ENCODE measurements at regions of chr2 and their contacts with region 1.

Region 1: GRCh38 chr2:119476301-119477021 is 44.8 kb downstream of the TMEM37 start:
- DNase-seq: peak; percentile 87
- H3K4me3 ChIP-seq: peak overlapping the region; percentile 23 to 42; a peak in 2 of 4 replicates
- H3K27ac ChIP-seq: no peak overlapping the region; a peak in 1 of 4 replicates
- H3K4me1 ChIP-seq: peaks cover 0 to 22% of the 10 kb centered on the region in 2 experiments; a peak in 1 of 4 replicates
- H3K27me3 ChIP-seq: no peaks in the 10 kb centered on the region
- CTCF ChIP-seq: peak; percentile 90
- EP300 ChIP-seq: no peak
- RAD21 ChIP-seq: peak; percentile 87

Region 2: DNA sequence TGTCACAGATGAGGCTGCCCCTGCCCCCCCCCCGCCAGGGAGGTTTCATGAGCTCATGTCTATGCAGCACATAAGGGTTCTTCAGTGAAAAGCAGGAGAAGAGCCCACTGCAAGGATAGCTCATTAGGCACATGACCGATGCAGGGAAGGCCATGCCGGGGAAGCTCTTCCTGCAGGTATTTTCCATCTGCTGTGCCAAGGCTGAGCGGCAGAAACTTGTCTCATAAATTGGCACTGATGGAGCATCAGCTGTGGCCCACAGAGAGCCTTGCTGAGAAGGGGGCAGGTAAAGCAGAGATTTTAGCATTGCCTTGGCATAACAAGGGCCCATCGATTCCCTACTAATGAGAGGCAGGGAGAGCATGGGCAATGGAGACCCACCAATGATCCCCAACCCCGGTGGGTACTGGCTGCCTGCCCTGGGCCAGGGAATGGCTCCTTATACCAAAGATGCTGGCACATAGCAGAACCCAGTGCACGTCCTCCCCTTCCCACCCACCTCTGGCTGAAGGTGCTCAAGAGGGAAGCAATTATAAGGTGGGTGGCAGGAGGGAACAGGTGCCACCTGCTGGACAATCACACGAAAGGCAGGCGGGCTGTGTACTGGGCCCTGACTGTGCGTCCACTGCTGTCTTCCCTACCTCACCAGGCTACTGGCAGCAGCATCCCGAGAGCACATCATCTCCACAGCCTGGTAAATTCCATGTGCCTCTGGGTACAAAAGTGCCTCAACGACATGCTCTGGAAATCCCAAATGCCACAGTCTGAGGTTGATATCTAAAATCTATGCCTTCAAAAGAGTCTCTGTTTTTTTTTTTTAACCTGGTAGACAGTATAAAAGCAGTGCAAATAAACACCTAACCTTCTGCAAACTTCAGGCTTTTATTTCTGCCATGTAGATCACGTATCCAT is 211.4 kb before region 1 on chr2:
- CTCF ChIA-PET with region 1: no interaction called
- POLR2A ChIA-PET with region 1: no interaction called
- DNase-seq: peak; percentile 75
- H3K4me3 ChIP-seq: no peak overlapping the region; a peak in 1 of 4 replicates
- H3K27ac ChIP-seq: no peak overlapping the region
- H3K4me1 ChIP-seq: no peaks in the 10 kb centered on the region
- H3K27me3 ChIP-seq: no peaks in the 10 kb centered on the region
- CTCF ChIP-seq: peak; percentile 78
- EP300 ChIP-seq: no peak
- RAD21 ChIP-seq: peak; percentile 83

Region 3: DNA sequence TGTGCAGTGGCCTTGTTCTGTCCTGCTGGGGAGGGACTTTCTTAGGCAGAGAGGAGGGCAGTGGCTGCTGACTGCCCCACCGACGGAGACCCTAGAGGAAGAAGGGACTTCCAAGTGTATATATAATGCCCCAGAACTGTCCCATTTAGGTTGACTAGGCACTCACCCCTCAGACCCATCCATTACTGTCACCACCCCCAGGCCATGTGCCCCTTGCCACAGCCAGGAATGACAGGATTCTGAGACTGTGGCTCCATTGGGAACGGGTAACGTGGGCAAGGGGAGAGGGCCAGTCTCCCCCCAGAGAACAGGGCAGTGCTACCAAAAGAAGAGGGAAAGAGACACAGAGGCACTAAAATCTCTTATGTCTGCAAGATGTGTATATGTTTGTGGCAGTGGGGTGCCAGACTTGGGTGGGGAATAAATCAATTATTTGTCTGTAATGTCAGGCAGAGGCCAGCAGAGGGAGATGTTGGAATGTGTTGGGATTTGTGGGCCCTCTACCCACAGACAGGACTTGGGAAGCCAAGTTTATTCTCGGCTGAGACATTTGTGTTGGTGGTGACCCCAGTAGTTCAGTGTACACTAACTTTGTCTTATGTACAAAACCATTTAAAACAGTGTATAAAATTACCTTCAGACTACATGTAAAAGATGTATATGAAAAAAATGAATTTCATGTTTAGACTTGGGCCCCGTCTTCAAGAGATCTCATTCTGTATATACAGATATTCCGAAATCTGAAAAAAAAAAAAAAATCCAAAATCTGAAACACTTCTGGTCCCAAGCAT is 68.8 kb before region 1 on chr2:
- CTCF ChIA-PET with region 1: interaction called, 95 read pairs
- POLR2A ChIA-PET with region 1: no interaction called
- DNase-seq: peak; percentile 79
- H3K4me3 ChIP-seq: no peak overlapping the region
- H3K27ac ChIP-seq: no peak overlapping the region
- H3K4me1 ChIP-seq: no peaks in the 10 kb centered on the region
- H3K27me3 ChIP-seq: no peaks in the 10 kb centered on the region; the same call in 1 of the 2 replicates
- CTCF ChIP-seq: peak; percentile 82
- EP300 ChIP-seq: no peak
- RAD21 ChIP-seq: peak; percentile 96

Region 4: DNA sequence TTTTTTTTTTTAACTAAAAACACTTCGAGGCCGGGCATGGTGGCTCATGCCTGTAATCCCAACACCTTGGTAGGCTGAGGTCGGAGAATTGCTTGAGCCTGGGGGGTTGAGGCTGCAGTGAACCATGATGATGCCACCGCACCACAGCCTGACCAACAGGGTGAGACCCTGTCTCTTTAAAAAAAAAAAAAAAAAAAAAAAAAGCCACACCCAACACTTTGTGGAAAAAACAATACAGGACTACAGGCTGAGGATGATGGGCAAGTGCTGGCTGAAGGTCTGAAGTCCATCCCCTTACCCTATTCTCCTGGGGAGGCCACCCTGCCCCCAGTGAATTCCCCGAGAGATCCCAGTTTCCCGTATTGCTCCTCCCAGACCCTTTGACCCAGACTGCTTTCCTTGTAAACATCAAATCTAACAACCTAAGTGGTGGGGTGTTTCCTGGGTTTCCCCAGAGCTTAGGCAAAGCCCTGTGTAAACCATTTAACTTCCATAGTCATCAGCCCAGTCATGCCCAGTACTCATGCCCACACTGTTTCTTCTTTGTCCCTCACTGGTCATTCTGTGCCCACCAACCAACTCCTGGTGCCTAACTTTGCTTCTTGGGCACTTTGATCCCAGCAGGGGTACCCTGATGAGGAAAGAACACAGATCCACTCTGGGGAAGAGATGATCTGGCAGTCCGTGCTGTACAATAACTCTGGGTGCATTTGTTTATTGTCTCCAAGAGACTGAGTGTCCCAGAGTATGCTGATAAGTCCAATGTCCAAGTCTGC is 50.7 kb before region 1 on chr2:
- CTCF ChIA-PET with region 1: interaction called, 17 read pairs
- POLR2A ChIA-PET with region 1: no interaction called
- DNase-seq: no peak
- H3K4me3 ChIP-seq: no peak overlapping the region
- H3K27ac ChIP-seq: no peak overlapping the region
- H3K4me1 ChIP-seq: peaks cover 0 to 3% of the 10 kb centered on the region in 2 experiments; a peak in 2 of 4 replicates
- H3K27me3 ChIP-seq: peaks cover 7% of the 10 kb centered on the region
- CTCF ChIP-seq: no peak
- EP300 ChIP-seq: no peak
- RAD21 ChIP-seq: no peak

Region 5: DNA sequence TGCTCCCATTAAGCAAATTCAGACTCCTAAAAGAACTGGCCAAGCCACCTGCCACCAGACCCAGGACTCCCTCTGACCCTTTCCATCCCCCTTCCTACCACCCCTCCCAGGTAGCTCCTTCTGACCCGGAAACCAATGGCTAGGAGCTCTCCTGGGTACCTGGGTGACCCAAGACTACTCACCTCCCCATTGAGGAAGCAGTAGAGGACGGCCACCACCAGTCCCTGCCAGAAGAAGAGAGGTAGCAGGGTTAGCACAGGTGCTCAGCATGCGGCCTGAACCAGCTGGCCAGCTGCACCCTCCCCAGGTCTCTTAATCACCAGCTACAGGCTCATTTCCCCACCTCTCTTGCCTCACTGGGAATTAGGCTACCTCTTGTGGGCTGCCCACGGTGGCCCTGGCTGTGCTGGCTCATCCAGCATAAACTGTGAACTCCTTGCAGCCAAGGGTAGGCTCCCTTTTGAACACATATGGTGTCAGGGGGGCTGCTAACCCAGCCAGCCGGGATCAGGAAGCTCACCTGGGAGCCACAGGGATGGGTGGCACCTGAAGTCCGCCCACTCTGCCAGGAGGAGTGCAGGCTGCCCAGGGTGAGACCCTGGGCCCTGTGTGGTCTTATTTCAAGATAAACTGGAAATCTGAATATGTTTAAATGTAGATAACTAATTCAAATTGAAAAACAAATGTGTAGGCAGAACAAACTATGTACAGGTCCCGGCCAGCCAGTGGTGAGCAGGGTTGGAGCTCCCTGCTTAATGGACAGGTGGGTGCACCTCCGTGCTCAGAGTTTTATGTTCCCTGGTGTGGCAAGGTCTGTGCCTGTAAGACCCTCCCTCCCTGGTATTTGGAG is 34.9 kb before region 1 on chr2:
- CTCF ChIA-PET with region 1: interaction called, 18 read pairs
- POLR2A ChIA-PET with region 1: no interaction called
- DNase-seq: no peak
- H3K4me3 ChIP-seq: no peak overlapping the region
- H3K27ac ChIP-seq: no peak overlapping the region
- H3K4me1 ChIP-seq: peaks cover 0 to 6% of the 10 kb centered on the region in 2 experiments; a peak in 1 of 4 replicates
- H3K27me3 ChIP-seq: peaks cover 9% of the 10 kb centered on the region; the same call in 1 of the 2 replicates
- CTCF ChIP-seq: no peak
- EP300 ChIP-seq: no peak
- RAD21 ChIP-seq: no peak

Region 6: GRCh38 chr2:119463051-119463510 is 13.4 kb before region 1 on chr2:
- CTCF ChIA-PET with region 1: interaction called, 56 read pairs
- POLR2A ChIA-PET with region 1: no interaction called
- DNase-seq: no peak
- H3K4me3 ChIP-seq: no peak overlapping the region
- H3K27ac ChIP-seq: no peak overlapping the region
- H3K4me1 ChIP-seq: no peaks in the 10 kb centered on the region
- H3K27me3 ChIP-seq: no peaks in the 10 kb centered on the region
- CTCF ChIP-seq: no peak
- EP300 ChIP-seq: no peak
- RAD21 ChIP-seq: no peak

Region 7: GRCh38 chr2:119508756-119509155 is 32.3 kb after region 1 on chr2:
- CTCF ChIA-PET with region 1: no interaction called
- POLR2A ChIA-PET with region 1: no interaction called
- DNase-seq: no peak
- H3K4me3 ChIP-seq: no peak overlapping the region
- H3K27ac ChIP-seq: no peak overlapping the region
- H3K4me1 ChIP-seq: no peaks in the 10 kb centered on the region
- H3K27me3 ChIP-seq: no peaks in the 10 kb centered on the region
- CTCF ChIP-seq: no peak
- EP300 ChIP-seq: no peak
- RAD21 ChIP-seq: no peak

Region 8: DNA sequence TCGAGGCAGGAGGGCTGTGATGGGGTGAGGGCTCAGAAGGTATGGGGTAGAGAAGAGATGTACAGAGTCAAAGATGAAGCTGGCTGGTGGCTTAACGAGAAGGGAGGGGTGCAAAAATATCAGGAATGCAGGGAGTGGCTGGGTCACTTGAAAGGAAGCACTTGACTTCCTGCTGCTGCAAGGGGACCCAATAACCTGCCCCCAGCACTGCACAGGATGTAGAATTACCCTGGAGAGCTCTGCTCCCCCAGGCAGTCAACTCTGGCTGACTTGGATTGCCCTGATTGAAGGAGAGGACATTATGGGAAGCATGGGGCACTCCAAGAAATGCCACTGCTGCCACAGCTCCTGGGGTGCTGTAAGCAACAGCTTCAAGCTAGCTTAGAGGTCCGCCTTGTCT is 109.6 kb after region 1 on chr2:
- CTCF ChIA-PET with region 1: interaction called, 10 read pairs
- POLR2A ChIA-PET with region 1: no interaction called
- DNase-seq: no peak
- H3K4me3 ChIP-seq: no peak overlapping the region
- H3K27ac ChIP-seq: no peak overlapping the region
- H3K4me1 ChIP-seq: peaks cover 0 to 17% of the 10 kb centered on the region in 2 experiments; a peak in 1 of 4 replicates
- H3K27me3 ChIP-seq: no peaks in the 10 kb centered on the region
- CTCF ChIP-seq: no peak
- EP300 ChIP-seq: no peak
- RAD21 ChIP-seq: no peak

Measured in SK-N-SH (cell line).